ENCODE measurements at regions of chr2 and their contacts with region 1.

Region 1: GRCh38 chr2:100992262-100992661 is 9.8 kb upstream of the RPL31 start:
- DNase-seq: no peak
- ATAC-seq: no peak

Region 2: DNA sequence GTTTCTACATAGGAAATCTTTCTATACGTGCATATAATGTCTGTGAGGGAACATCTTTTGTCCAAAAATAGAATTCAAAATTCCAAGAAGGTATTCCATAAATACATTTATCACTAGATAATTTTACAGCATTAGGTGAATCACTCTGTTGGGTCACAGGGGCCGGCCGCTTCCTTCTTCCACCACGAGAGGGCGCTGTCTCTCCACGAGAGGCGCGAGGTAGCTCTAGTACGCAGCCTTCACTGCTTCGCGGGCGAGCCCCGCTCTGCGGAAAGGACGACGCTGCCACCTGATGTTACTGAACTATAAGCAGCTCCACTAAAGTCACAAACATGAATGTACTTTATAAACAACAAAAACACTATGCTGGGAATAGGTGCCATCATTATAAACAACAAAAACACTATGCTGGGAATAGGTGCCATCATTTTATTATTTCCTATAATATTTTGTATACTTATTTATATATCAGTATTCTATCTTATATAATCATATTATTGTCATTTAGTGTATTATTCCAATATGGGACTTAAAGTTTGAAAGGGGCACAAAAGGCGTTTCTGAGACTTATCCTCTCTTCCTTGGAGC is 1433.1 kb before region 1 on chr2:
- intact Hi-C with region 1: no loop called
- DNase-seq: peak; percentile 96
- ATAC-seq: peak; percentile 94

Region 3: GRCh38 chr2:100610381-100610831 is 381.9 kb before region 1 on chr2:
- intact Hi-C with region 1: loop called (anchors 5 kb)
- DNase-seq: peak; percentile 80
- ATAC-seq: peak; percentile 81